Heart left ventricle (tissue), 16 donors: ENCODE measurements at regions of chr18 and their contacts with region 1.

Region 1: GRCh38 chr18:73279498-73279897 is 411.7 kb upstream of the NETO1 start:
- DNase-seq: peak; percentile 57 to 81 (median 69)
- ATAC-seq: peak; percentile 96 to 99 (median 98)
- H3K4me3 ChIP-seq: peak overlapping the region in 3 of 12 donors; percentile 4 to 19 (median 7)
- H3K27ac ChIP-seq: peak overlapping the region in 5 of 12 donors; percentile 5 to 59 (median 52)
- H3K4me1 ChIP-seq: no peaks in the 10 kb centered on the region
- H3K27me3 ChIP-seq: no peaks in the 10 kb centered on the region
- CTCF ChIP-seq: no peak
- POLR2A ChIP-seq: no peak

Region 2: GRCh38 chr18:73235491-73235890 is 44.0 kb before region 1 on chr18:
- intact Hi-C with region 1: no loop called
- DNase-seq: no peak
- ATAC-seq: peak in 1 of 4 donors; percentile 43
- H3K4me3 ChIP-seq: no peak overlapping the region
- H3K27ac ChIP-seq: no peak overlapping the region
- H3K4me1 ChIP-seq: no peaks in the 10 kb centered on the region
- H3K27me3 ChIP-seq: no peaks in the 10 kb centered on the region
- CTCF ChIP-seq: no peak
- POLR2A ChIP-seq: no peak

Region 3: GRCh38 chr18:73331212-73331772 is 51.8 kb after region 1 on chr18:
- intact Hi-C with region 1: loop called in 1 of 10 experiments (anchors 10 kb)
- DNase-seq: no peak
- ATAC-seq: no peak
- H3K4me3 ChIP-seq: no peak overlapping the region
- H3K27ac ChIP-seq: no peak overlapping the region
- H3K4me1 ChIP-seq: no peaks in the 10 kb centered on the region
- H3K27me3 ChIP-seq: no peaks in the 10 kb centered on the region
- CTCF ChIP-seq: no peak
- POLR2A ChIP-seq: no peak

Region 4: DNA sequence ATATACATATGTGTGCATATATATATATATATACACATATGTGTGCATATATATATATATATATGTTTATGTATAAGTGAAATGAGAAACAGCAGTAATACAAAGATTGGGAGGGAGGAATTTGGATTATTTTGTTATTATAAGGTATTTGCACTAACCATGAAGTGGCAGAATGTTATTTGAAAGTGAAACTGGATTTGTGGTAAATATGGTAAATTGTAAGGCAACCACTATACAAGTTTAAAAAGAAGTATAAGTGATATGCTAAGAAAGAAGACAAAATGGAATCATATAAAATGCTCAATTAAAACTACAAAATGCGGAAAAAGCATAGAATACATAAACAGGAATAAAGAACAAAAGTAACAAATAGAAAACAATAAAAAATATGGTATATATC is 830.7 kb after region 1 on chr18:
- intact Hi-C with region 1: no loop called
- DNase-seq: no peak
- ATAC-seq: no peak
- H3K4me3 ChIP-seq: no peak overlapping the region
- H3K27ac ChIP-seq: no peak overlapping the region
- H3K4me1 ChIP-seq: no peaks in the 10 kb centered on the region
- H3K27me3 ChIP-seq: no peaks in the 10 kb centered on the region
- CTCF ChIP-seq: no peak
- POLR2A ChIP-seq: no peak